K562 (cell line): ENCODE measurements at regions of chr18 and their contacts with region 1.

Region 1: DNA sequence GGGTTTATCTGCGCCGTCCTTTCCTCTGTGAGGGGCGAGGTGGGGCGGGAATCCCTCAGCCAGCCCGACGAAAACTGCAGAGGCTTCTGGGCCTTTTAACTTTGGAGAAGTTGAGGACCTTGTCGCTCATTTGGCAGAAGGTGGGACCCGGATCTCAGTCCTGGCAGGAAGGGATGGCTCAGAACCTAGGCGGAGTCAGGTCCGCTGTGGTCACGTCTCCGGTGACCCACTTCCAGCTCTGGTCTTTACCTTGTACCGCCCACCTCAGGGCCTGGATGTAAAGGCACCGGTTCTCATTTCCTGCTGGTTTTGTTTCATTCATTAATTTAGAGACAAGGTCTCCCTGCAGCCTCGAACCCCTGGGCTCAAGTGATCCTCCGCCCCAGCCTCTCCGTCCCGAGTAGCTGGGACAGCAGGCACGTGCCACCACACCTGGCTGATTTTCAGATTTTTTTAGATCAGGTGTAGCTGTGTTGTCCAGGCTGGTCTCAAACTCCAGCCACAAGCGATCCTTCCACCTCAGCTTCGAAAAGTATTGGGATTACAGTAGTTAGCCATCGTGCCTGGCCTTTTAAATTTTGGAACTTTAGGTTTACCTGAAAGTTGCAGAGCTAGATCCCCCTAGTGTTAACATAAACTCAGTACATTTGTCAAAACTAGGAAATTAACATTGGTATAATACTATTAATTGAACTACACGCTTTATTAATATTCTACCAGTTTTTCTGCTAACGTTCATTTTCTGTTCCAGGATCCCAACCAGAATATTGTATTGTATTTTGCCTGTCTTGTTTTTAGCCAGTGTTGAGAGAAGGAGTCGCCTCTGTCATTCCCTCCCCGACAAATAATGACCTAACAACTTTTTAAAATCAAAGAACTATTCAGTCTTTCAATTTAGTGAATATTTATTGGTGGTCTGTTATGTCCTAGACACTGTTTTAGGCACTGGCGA is 852 bp downstream of the POLI start:
- DNase-seq: peak in 2 of 4 experiments; percentile 52 to 72
- ATAC-seq: peak; percentile 81
- H3K4me3 ChIP-seq: peak overlapping the region; percentile 55
- H3K27ac ChIP-seq: peak overlapping the region; percentile 92
- H3K4me1 ChIP-seq: peaks cover 6 to 14% of the 10 kb centered on the region in 2 experiments; a peak in 3 of 5 replicates
- H3K27me3 ChIP-seq: no peaks in the 10 kb centered on the region
- CTCF ChIP-seq: peak in 2 of 3 experiments; percentile 33 to 51; a peak in 3 of 6 replicates
- EP300 ChIP-seq: no peak
- POLR2A ChIP-seq: peak; percentile 56; the same call in 1 of the 2 replicates
- RAD21 ChIP-seq: peak; percentile 44 to 53

Region 2: DNA sequence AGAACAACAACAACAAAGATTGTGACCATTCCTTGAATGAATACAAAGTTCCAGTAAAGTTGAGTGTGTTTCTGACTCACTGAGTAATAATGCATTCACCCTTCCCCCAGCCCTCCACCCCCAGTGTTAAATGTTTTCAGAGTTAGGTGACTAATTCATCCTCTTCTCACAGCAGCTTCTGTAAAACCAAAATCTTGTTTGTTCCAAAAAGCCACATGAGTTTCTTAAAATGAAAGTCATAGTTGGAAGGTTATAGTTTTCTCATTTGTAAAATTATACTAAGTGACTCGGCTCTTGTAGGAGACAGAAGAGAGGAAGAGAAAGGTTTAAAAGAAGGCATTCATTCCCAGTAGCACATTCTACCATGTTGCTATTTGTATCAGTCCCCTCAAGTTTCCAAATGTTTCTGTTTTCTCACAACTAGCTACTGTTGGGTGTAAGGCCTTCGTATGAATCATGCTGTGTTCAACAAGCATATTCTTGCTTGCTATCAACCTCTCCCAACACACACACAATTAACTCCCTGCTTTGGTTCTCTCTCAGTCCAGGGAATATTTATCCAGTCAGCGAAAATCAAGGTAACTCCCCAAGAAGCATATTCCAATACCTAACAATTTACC is 121.0 kb before region 1 on chr18:
- CTCF ChIA-PET with region 1: no interaction called
- POLR2A ChIA-PET with region 1: no interaction called
- in situ Hi-C with region 1: no loop called
- intact Hi-C with region 1: loop called (anchors 10 kb)
- DNase-seq: peak in 2 of 4 experiments; percentile 24 to 38
- ATAC-seq: no peak
- H3K4me3 ChIP-seq: no peak overlapping the region
- H3K27ac ChIP-seq: peak overlapping the region; percentile 42; the same call in 2 of the 3 replicates
- H3K4me1 ChIP-seq: peaks cover 0 to 4% of the 10 kb centered on the region in 2 experiments; a peak in 1 of 5 replicates
- H3K27me3 ChIP-seq: no peaks in the 10 kb centered on the region
- CTCF ChIP-seq: no peak
- EP300 ChIP-seq: no peak
- POLR2A ChIP-seq: no peak
- RAD21 ChIP-seq: no peak

Region 3: GRCh38 chr18:54224379-54225014 is 45.7 kb before region 1 on chr18 and contains the start of gene MBD2:
- CTCF ChIA-PET with region 1: interaction called, 3 read pairs
- POLR2A ChIA-PET with region 1: interaction called, 4 read pairs
- in situ Hi-C with region 1: no loop called
- intact Hi-C with region 1: loop called (anchors 1 kb)
- DNase-seq: peak; percentile 86 to 96 (median 90)
- ATAC-seq: peak; percentile 99
- H3K4me3 ChIP-seq: peak within 1 kb of the TSS; percentile 56
- H3K27ac ChIP-seq: peak within 1 kb of the TSS; percentile 61
- H3K4me1 ChIP-seq: peaks cover 0 to 1% of the 10 kb centered on the region in 2 experiments; a peak in 3 of 5 replicates
- H3K27me3 ChIP-seq: no peaks in the 10 kb centered on the region
- CTCF ChIP-seq: peak; percentile 39 to 42 (median 39); a peak in 4 of 6 replicates
- EP300 ChIP-seq: no peak
- POLR2A ChIP-seq: no peak
- RAD21 ChIP-seq: peak; percentile 22 to 39; a peak in 3 of 4 replicates
- polyA plus RNA-seq, gene MBD2: 4.4 to 5.0 TPM

Region 4: GRCh38 chr18:54232485-54233227 is 37.5 kb before region 1 on chr18:
- CTCF ChIA-PET with region 1: no interaction called
- POLR2A ChIA-PET with region 1: interaction called, 4 read pairs
- in situ Hi-C with region 1: no loop called
- intact Hi-C with region 1: loop called (anchors 2 kb)
- DNase-seq: no peak
- ATAC-seq: peak; percentile 72
- H3K4me3 ChIP-seq: no peak overlapping the region
- H3K27ac ChIP-seq: no peak overlapping the region
- H3K4me1 ChIP-seq: peaks cover 0 to 10% of the 10 kb centered on the region in 2 experiments; a peak in 2 of 5 replicates
- H3K27me3 ChIP-seq: no peaks in the 10 kb centered on the region
- CTCF ChIP-seq: peak in 1 of 3 experiments; percentile 27; a peak in 1 of 6 replicates
- EP300 ChIP-seq: no peak
- POLR2A ChIP-seq: no peak
- RAD21 ChIP-seq: peak; percentile 30 to 34; a peak in 3 of 4 replicates